ENCODE measurements at regions of chr3 and their contacts with region 1.

Region 1: DNA sequence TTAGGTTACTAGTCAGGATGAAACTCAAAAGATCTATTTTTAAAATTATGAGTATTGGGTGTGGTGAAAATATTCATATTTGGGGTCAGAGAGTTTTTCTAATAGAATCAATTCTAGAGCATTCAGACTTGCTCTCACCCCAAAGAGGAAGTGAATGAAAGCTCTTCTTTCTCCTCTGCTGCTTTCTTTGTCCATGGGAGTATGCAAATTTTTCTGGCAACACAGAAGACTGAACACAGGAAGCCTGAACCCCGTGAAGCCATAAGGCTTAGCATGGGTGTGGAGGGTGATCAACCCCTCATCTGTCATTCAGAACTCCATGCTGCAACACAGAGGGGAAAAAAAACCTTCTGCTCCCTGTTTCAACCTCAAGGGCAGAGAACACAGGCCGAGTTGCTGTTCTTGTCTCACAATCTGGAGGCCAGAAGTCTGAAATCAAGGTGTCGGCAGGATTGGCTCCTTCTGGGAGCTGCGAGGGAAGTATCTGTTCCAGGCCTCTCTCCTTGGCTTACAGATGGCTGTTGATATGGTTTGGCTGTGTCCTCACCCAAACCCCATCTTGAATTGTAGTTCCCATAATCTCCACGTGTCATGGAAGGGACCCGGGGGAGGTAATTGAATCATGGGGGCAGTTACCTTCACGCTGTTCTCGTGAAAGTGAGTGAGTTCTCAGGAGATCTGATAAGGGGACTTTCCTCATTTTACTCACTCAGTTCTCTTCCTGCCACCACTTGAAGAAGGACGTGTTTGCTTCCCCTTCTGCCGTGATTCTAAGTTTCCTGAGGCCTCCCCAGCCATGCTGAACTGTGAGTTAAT is 33.7 kb upstream of the CD47 start:
- DNase-seq: peak in 13 of 14 experiments; percentile 17 to 92 (median 45)
- ATAC-seq: peak; percentile 56
- H3K4me3 ChIP-seq: peak overlapping the region; percentile 55
- H3K4me3 Mint-ChIP-seq: peak overlapping the region; percentile 87
- H3K27ac ChIP-seq: peak overlapping the region; percentile 93
- H3K27ac Mint-ChIP-seq: peak overlapping the region; percentile 95
- H3K4me1 ChIP-seq: peaks cover 67% of the 10 kb centered on the region
- H3K4me1 Mint-ChIP-seq: peaks cover 73% of the 10 kb centered on the region
- H3K27me3 ChIP-seq: no peaks in the 10 kb centered on the region
- H3K27me3 Mint-ChIP-seq: no peaks in the 10 kb centered on the region
- CTCF ChIP-seq: no peak

Region 2: GRCh38 chr3:108073764-108074431 is 50.6 kb before region 1 on chr3:
- CTCF ChIA-PET with region 1: no interaction called
- POLR2A ChIA-PET with region 1: interaction called, 6 read pairs
- intact Hi-C with region 1: loop called in 1 of 2 experiments (anchors 10 kb)
- DNase-seq: no peak
- ATAC-seq: no peak
- H3K4me3 ChIP-seq: no peak overlapping the region
- H3K4me3 Mint-ChIP-seq: peak overlapping the region; percentile 39
- H3K27ac ChIP-seq: no peak overlapping the region
- H3K27ac Mint-ChIP-seq: peak overlapping the region; percentile 23
- H3K4me1 ChIP-seq: peaks cover 15% of the 10 kb centered on the region
- H3K4me1 Mint-ChIP-seq: peaks cover 93% of the 10 kb centered on the region
- H3K27me3 ChIP-seq: no peaks in the 10 kb centered on the region
- H3K27me3 Mint-ChIP-seq: no peaks in the 10 kb centered on the region
- CTCF ChIP-seq: no peak

Region 3: GRCh38 chr3:108100906-108101660 is 23.5 kb before region 1 on chr3:
- CTCF ChIA-PET with region 1: no interaction called
- POLR2A ChIA-PET with region 1: interaction called, 11 read pairs
- intact Hi-C with region 1: loop called in 1 of 2 experiments (anchors 2 kb)
- DNase-seq: peak in 5 of 14 experiments; percentile 14 to 74 (median 42)
- ATAC-seq: peak; percentile 79
- H3K4me3 ChIP-seq: no peak overlapping the region
- H3K4me3 Mint-ChIP-seq: peak overlapping the region; percentile 2
- H3K27ac ChIP-seq: peak overlapping the region in 1 of 2 donors; percentile 22
- H3K27ac Mint-ChIP-seq: peak overlapping the region; percentile 73
- H3K4me1 ChIP-seq: peaks cover 19% of the 10 kb centered on the region
- H3K4me1 Mint-ChIP-seq: peaks cover 56% of the 10 kb centered on the region
- H3K27me3 ChIP-seq: no peaks in the 10 kb centered on the region
- H3K27me3 Mint-ChIP-seq: no peaks in the 10 kb centered on the region
- CTCF ChIP-seq: no peak